PC-9 (cell line): ENCODE measurements at regions of chr6 and their contacts with region 1.

Region 1: DNA sequence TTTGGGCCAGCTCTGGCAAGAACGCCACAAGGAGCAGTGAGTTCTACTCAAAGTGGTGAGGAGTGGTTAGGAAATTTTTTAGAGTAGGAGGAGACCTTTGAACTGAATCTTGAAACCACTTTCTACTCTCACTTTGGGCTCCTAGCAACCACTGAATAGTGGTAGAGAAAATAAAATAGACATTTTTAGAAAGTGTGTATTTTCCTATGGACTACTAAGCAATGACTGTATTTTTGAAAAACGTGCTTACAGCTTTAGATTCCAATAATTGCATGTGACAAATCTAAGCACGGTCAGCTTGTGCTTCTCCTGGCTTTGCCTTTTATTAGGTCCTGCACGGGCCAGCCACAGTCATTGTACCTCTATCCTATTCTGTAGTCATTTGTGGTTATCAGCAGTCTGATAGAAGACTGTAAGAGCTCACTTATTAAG is 8.7 kb upstream of the IFNGR1 start:
- DNase-seq: no peak
- H3K4me3 ChIP-seq: no peak overlapping the region
- H3K27ac ChIP-seq: no peak overlapping the region
- H3K4me1 ChIP-seq: peaks cover 13% of the 10 kb centered on the region
- H3K27me3 ChIP-seq: no peaks in the 10 kb centered on the region
- CTCF ChIP-seq: no peak

Region 2: DNA sequence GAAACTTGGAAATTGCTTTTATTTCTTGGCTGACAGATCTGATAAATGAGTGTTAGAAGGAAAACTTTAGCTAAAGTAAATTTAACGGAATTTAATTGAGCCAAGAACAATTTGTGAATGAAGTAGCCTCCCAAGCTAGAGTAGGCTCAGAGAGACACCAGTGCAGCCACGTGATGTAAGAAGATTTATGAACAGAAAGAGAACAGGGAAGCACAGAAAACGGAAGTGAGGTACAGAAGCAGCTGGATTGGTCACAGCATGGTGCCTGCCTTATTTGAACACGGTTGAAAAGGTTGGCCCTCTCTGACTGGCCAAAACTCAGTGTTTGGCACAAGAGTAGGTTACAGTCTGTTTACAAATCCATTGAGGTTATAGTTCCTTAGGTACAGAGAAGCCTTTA is 20.8 kb after region 1 on chr6:
- CTCF ChIA-PET with region 1: no interaction called
- POLR2A ChIA-PET with region 1: no interaction called
- intact Hi-C with region 1: loop called (anchors 1 kb)
- DNase-seq: peak in 1 of 2 experiments; percentile 26
- H3K4me3 ChIP-seq: no peak overlapping the region
- H3K27ac ChIP-seq: no peak overlapping the region
- H3K4me1 ChIP-seq: no peaks in the 10 kb centered on the region
- H3K27me3 ChIP-seq: no peaks in the 10 kb centered on the region
- CTCF ChIP-seq: no peak

Region 3: DNA sequence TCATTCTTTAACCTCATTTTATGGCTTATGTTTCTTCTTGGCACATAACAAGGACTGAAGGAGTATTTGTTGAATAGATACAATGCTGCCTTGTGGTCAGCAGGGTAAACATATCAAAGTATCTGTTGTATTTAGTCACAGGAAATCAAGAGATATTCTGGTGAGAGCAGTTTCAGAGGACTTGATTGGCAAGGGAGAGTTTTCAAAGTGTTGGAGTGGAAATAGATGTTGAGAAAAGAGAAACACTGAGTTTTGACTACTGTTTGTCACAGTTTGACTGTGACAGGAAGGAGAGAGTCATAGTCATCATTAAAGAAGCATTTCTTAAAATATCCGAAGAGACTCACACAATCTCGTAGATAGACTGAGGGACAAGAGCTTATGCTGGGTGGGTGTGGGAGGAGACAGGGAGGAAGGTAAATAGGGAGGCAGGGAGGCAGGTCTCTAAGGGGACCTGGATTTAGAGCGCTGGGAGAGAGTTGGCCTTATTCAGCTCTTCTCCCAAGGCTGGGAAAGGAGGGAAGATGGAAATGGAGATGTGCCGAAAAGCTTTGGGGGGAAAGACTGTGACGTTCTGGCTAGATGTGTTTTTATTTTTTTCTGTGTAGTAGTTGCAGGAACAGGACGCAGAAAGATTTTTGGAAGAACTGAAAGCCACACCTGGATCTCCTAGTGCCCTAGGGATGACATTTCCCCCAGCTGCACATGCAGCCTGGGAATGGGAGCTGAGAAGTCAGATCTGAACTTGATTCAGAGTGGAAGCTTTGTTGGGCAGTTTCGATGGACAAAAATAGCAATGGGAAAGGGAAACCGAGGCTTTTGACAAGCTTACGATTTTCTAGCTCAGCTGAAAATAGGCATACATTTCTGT is 56.3 kb after region 1 on chr6:
- CTCF ChIA-PET with region 1: no interaction called
- POLR2A ChIA-PET with region 1: no interaction called
- intact Hi-C with region 1: no loop called
- DNase-seq: peak in 1 of 2 experiments; percentile 78
- H3K4me3 ChIP-seq: no peak overlapping the region
- H3K27ac ChIP-seq: peak overlapping the region; percentile 28; the same call in 1 of the 2 replicates
- H3K4me1 ChIP-seq: peaks cover 15% of the 10 kb centered on the region
- H3K27me3 ChIP-seq: no peaks in the 10 kb centered on the region
- CTCF ChIP-seq: no peak